ENCODE measurements at regions of chr7 and their contacts with region 1.

Region 1: GRCh38 chr7:125061776-125062397 is 132.3 kb upstream of the POT1 start:
- DNase-seq: peak; percentile 35
- ATAC-seq: peak; percentile 72
- H3K4me3 ChIP-seq: no peak overlapping the region
- H3K27ac ChIP-seq: no peak overlapping the region
- H3K4me1 ChIP-seq: peaks cover 2 to 14% of the 10 kb centered on the region in 2 experiments; a peak in 2 of 4 replicates
- H3K27me3 ChIP-seq: no peaks in the 10 kb centered on the region
- CTCF ChIP-seq: no peak
- POLR2A ChIP-seq: no peak
- RAD21 ChIP-seq: 0 out of 2 replicates have a peak, but pooled peaks have one; percentile 9

Region 2: DNA sequence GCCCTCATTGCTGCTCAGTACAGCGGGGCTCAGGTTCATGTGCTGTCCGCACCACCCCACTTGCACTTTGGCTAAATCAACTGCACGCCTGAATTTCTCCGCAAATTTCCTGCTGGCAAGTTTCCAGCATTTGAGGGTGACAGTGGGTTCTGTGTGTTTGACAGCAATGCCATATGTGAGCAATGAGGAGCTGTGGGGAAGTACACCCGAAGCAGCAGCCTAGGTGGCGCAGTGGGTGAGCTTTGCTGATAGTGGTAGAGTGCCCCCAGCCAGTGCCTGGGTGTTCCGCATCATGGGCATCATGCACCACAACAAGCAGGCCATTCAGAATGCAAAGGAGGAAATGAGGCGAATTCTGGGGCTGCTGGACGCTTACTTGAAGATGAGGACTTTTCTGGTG is 28.4 kb before region 1 on chr7:
- CTCF ChIA-PET with region 1: interaction called, 11 read pairs
- POLR2A ChIA-PET with region 1: no interaction called
- RAD21 ChIA-PET with region 1: no interaction called
- intact Hi-C with region 1: no loop called
- DNase-seq: no peak
- ATAC-seq: peak; percentile 70
- H3K4me3 ChIP-seq: no peak overlapping the region
- H3K27ac ChIP-seq: no peak overlapping the region
- H3K4me1 ChIP-seq: no peaks in the 10 kb centered on the region
- H3K27me3 ChIP-seq: no peaks in the 10 kb centered on the region
- CTCF ChIP-seq: 0 out of 6 replicates have a peak, but pooled peaks of 1 of the 3 experiments have one; percentile 15
- POLR2A ChIP-seq: no peak
- RAD21 ChIP-seq: no peak; the same call in 1 of the 2 replicates

Region 3: GRCh38 chr7:125316466-125316865 is 254.6 kb after region 1 on chr7:
- CTCF ChIA-PET with region 1: interaction called, 23 read pairs
- POLR2A ChIA-PET with region 1: no interaction called
- RAD21 ChIA-PET with region 1: interaction called, 5 to 12 read pairs
- intact Hi-C with region 1: loop called (anchors 1 kb)
- DNase-seq: peak; percentile 39
- ATAC-seq: peak; percentile 97
- H3K4me3 ChIP-seq: no peak overlapping the region
- H3K27ac ChIP-seq: no peak overlapping the region
- H3K4me1 ChIP-seq: no peaks in the 10 kb centered on the region
- H3K27me3 ChIP-seq: no peaks in the 10 kb centered on the region
- CTCF ChIP-seq: peak; percentile 36 to 53 (median 45); a peak in 4 of 6 replicates
- POLR2A ChIP-seq: no peak
- RAD21 ChIP-seq: peak; percentile 83

Region 4: DNA sequence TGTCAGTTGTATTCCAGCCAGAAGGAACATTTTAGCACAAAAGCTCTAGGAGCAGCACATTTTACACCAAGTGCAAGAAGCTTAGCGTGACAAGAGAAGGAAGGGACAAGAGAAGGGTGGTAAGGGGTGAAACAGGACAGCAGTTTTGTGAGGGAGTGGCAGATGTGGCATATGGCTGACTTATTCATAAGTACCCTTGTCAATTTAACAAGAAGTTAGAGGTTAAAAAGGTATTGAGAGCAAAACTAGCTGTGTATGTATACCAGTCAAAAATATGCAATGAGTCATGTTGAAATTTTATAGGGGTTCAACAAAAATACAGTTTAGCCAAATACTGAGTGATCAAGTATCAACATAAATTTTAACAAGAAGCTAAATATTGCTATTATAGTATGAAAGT is 429.2 kb after region 1 on chr7:
- CTCF ChIA-PET with region 1: no interaction called
- POLR2A ChIA-PET with region 1: no interaction called
- RAD21 ChIA-PET with region 1: no interaction called
- intact Hi-C with region 1: no loop called
- DNase-seq: no peak
- ATAC-seq: no peak
- H3K4me3 ChIP-seq: no peak overlapping the region
- H3K27ac ChIP-seq: no peak overlapping the region
- H3K4me1 ChIP-seq: no peaks in the 10 kb centered on the region
- H3K27me3 ChIP-seq: no peaks in the 10 kb centered on the region
- CTCF ChIP-seq: no peak
- POLR2A ChIP-seq: no peak
- RAD21 ChIP-seq: no peak

Region 5: DNA sequence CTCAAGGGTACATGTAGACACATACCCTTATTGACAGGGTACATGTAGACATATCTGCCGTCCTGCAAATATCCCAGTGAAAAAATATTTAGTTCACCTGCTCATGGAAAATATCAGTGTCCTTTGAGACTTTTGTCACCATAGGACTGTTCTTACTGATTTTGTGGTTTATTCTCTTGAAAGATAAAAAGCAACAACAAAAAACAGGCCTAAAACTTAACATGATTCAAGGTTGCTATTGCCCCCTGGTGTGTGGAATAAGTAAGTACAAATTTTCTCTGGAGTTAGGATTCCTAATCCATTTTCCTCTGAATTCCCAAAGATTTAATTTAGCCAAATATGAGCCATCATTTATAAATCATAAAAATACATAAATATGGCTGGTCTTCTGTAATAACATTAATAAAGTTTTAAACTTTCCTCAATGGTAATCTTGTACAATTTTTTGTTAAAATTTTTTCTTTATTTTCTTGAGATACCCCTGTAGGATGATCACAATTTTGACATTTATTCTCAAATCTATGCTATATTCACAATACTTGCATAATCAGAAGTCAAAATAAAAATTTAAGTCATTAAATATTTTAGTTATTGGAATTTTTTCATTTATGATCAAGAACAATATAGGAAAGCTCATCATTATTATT is 609.2 kb after region 1 on chr7:
- CTCF ChIA-PET with region 1: interaction called, 8 read pairs
- POLR2A ChIA-PET with region 1: no interaction called
- RAD21 ChIA-PET with region 1: no interaction called
- intact Hi-C with region 1: loop called (anchors 1 kb)
- DNase-seq: peak; percentile 22
- ATAC-seq: no peak; the same call in 1 of the 2 replicates
- H3K4me3 ChIP-seq: no peak overlapping the region
- H3K27ac ChIP-seq: no peak overlapping the region
- H3K4me1 ChIP-seq: no peaks in the 10 kb centered on the region
- H3K27me3 ChIP-seq: no peaks in the 10 kb centered on the region
- CTCF ChIP-seq: peak; percentile 50 to 72 (median 61); a peak in 5 of 6 replicates
- POLR2A ChIP-seq: no peak
- RAD21 ChIP-seq: peak; percentile 73

Measured in HCT116 (cell line).